Ovary (tissue), 10 donors: ENCODE measurements at regions of chr14 and their contacts with region 1.

Region 1: GRCh38 chr14:30214461-30215090 is 286.9 kb upstream of the PRKD1 start:
- DNase-seq: no peak
- H3K4me3 ChIP-seq: no peak overlapping the region
- H3K27ac ChIP-seq: no peak overlapping the region
- H3K4me1 ChIP-seq: no peaks in the 10 kb centered on the region
- H3K27me3 ChIP-seq: no peaks in the 10 kb centered on the region
- CTCF ChIP-seq: peak in 2 of 3 donors; percentile 46 to 50
- EP300 ChIP-seq: no peak
- POLR2A ChIP-seq: no peak

Region 2: DNA sequence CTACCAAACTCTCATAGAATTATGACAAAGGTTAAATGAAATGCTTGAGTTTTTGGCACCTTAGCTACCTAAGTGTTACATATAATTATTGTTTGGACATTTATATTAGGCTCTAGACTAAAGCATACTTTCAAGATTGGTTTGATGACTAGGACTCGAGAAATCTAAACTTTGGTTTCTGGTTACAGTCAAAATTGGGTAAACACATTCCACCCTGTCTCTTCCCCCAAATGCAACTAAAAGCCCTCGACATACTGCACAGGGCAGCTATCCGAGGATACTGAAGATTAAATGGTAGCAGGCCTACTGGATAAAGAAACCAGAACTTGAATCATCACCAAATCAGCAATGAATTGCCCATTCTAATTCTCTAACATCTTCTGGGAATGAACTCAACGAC is 656.1 kb before region 1 on chr14:
- intact Hi-C with region 1: loop called in 1 of 4 experiments (anchors 10 kb)
- DNase-seq: no peak
- H3K4me3 ChIP-seq: no peak overlapping the region
- H3K27ac ChIP-seq: no peak overlapping the region
- H3K4me1 ChIP-seq: no peaks in the 10 kb centered on the region
- H3K27me3 ChIP-seq: no peaks in the 10 kb centered on the region
- CTCF ChIP-seq: no peak
- EP300 ChIP-seq: no peak
- POLR2A ChIP-seq: no peak